ENCODE measurements at regions of chr17 and their contacts with region 1.

Region 1: GRCh38 chr17:8156246-8156992 is 4.2 kb upstream of the PER1 start:
- DNase-seq: peak; percentile 98
- ATAC-seq: peak; percentile 82
- H3K4me3 Mint-ChIP-seq: no peak overlapping the region
- H3K27ac Mint-ChIP-seq: no peak overlapping the region
- H3K4me1 Mint-ChIP-seq: peaks cover 48% of the 10 kb centered on the region
- H3K27me3 Mint-ChIP-seq: no peaks in the 10 kb centered on the region
- CTCF ChIP-seq: no peak

Region 2: DNA sequence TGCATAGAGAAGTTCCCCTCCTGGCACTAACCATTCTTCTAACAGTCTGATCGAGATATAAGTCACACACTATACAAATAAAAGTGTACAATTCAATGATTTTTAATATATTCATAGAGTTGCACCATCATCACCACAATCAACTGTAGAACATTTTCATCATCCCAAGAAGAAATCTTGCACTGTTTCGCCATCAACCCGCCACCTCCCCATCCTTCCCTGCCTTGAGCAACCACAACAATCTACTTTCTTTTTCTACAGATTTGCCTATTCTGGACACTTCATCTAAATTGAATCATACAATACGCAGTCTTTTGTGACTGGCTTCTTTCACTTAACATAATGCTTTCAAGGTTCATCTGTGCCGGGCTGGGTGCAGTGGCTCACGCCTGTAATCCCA is 187.0 kb before region 1 on chr17:
- CTCF ChIA-PET with region 1: no interaction called
- POLR2A ChIA-PET with region 1: no interaction called
- intact Hi-C with region 1: no loop called
- DNase-seq: no peak
- ATAC-seq: no peak
- H3K4me3 Mint-ChIP-seq: no peak overlapping the region
- H3K27ac Mint-ChIP-seq: no peak overlapping the region
- H3K4me1 Mint-ChIP-seq: no peaks in the 10 kb centered on the region
- H3K27me3 Mint-ChIP-seq: peaks cover 12% of the 10 kb centered on the region
- CTCF ChIP-seq: no peak

Region 3: DNA sequence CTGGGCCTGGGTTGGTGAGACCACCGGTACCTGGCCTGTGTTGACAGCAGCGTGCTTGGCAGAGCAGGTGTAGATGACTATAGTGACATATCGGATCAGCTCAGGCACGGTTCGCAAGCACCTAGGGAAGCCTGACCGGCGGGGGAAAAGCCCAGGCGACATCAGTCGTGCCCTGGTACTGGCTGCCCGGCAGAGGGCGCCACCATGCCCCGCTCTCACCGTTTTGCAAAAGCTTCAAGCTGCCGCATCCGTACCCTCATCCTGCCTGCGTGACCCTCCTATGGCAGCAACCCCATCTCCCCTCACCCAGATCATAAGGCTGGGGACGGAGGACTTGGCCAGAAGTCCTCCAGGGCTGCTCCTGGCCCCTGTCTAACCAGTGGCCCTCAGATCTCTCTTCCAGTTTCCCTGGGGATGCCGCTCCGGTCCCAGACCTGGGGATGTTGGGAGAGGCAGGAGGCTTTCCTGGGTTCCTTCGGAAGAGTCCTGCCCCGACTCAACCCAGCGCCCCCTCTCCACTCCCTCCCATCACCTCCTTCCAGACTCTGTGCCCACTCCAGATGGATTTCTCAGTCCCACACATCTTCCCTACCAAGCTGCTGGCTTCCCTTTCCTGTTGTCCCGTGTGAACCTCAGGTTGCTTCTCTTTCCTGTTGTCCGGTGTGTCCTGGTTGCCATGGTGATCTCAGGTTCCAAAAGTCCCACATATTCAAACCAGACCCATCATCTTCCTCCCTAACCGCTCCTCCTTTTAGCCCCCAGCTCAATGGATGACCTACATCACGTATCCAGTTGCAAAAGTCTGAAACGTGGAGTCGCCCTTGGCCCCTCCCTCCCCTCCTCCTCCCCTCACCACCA is 82.6 kb before region 1 on chr17:
- CTCF ChIA-PET with region 1: interaction called, 5 read pairs
- POLR2A ChIA-PET with region 1: interaction called, 5 read pairs
- intact Hi-C with region 1: loop called (anchors 1 kb)
- DNase-seq: peak; percentile 83
- ATAC-seq: peak; percentile 99
- H3K4me3 Mint-ChIP-seq: peak overlapping the region; percentile 78
- H3K27ac Mint-ChIP-seq: peak overlapping the region; percentile 78
- H3K4me1 Mint-ChIP-seq: peaks cover 31% of the 10 kb centered on the region
- H3K27me3 Mint-ChIP-seq: peaks cover 45% of the 10 kb centered on the region
- CTCF ChIP-seq: peak; percentile 56

Region 4: DNA sequence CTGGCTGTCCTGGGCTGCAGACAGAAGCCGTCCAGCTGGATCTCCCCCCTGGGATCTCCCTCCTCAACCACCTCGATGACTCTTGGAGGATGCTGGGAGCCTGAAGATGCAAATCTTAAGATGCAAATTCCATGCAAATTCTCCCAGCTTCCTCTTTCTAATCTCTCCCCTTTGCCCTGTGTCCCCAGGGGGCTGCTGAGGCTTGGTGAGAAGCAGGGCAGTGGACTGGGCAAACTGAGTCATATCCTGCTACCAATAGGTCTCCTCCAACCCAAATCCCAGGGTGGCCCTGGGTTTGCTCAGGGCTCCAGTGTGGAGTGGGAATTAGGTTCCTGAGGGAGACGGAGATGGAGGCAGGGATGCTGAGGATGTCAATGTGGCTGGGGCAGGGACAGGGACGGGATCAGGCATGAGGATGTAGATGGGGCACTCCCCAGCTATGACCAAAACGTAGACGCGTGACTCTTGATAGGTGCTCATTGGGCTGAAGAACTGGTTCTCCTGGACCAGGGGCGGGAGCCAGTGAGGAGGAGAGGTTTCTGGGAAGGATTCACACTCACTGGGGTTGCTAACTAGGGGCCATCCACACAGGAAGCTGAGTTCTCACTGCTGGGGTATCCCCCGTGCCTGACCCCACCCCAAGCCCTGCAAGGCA is 65.3 kb before region 1 on chr17:
- CTCF ChIA-PET with region 1: interaction called, 6 read pairs
- POLR2A ChIA-PET with region 1: interaction called, 24 read pairs
- intact Hi-C with region 1: no loop called
- DNase-seq: peak; percentile 71
- ATAC-seq: peak; percentile 90
- H3K4me3 Mint-ChIP-seq: peak overlapping the region; percentile 80
- H3K27ac Mint-ChIP-seq: peak overlapping the region; percentile 95
- H3K4me1 Mint-ChIP-seq: peaks cover 46% of the 10 kb centered on the region
- H3K27me3 Mint-ChIP-seq: peaks cover 7% of the 10 kb centered on the region
- CTCF ChIP-seq: no peak

Region 5: DNA sequence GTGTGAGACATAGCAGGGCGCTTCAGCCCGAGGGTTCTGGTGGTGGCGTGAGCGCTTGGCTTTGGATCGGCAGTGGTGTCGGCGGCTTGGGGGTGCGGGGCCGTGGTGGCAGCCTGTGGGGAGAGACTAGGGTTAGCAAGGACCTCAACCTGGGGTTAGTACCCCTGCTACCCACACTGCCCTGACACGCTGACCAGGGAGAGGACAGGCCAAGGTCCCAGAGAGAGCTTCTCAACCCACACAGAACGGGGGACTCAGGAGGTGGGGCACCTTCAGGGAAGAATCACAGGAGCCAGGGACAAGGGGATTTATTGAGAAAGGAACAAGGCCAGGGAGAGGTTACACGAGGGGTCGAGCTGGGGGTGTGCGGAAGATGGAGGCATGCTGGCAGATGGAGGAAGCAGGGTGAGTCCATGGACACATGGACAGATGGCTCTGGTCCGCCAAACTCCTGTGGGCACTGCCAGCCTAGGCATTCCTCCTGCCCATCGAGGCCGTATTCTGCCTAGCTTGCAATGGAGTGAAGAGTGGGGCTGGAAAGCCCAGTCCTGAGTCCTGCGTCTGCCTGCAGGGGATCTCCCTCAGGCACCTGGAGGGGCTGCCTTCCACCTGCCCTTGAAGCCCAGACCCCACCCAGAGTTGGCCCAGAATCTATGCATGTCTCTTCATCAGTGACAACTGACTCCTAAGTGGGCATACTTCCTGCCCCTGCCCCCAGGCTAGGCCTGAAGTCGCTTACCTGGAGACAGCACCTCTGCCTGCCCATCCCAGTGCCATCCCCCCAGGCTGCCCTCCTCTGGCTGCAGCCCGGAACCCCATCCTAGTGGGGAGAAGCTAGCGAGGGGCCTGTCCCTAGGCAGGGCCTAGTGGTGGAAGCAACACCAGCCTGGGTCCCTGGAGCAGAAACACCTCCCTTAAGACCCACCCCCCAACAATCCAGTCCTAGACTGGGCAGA is 12.4 kb before region 1 on chr17:
- CTCF ChIA-PET with region 1: interaction called, 9 read pairs
- POLR2A ChIA-PET with region 1: interaction called, 139 read pairs
- intact Hi-C with region 1: loop called (anchors 1 kb)
- DNase-seq: no peak
- ATAC-seq: no peak
- H3K4me3 Mint-ChIP-seq: no peak overlapping the region
- H3K27ac Mint-ChIP-seq: no peak overlapping the region
- H3K4me1 Mint-ChIP-seq: no peaks in the 10 kb centered on the region
- H3K27me3 Mint-ChIP-seq: no peaks in the 10 kb centered on the region
- CTCF ChIP-seq: no peak

Region 6: DNA sequence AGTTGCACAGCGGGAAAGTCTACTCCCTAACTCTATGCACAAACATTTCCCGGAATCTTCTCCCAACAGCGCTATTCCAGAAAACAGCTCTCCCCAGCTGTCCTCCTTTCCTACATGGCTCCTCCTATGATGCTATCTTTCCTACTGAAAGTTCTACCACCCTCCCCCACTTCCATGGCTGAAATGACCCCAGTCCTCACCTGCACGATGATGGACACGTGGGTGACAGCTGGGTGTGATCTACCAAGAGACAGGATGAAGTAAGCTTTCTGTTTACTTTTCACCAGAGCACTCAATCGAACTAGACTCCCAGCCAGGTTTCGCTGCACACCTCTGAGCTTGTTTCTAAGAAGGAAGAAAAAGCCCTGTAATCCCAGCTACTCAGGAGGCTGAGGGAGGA is 80.8 kb after region 1 on chr17:
- CTCF ChIA-PET with region 1: no interaction called
- POLR2A ChIA-PET with region 1: interaction called, 13 read pairs
- intact Hi-C with region 1: no loop called
- DNase-seq: no peak
- ATAC-seq: no peak
- H3K4me3 Mint-ChIP-seq: no peak overlapping the region
- H3K27ac Mint-ChIP-seq: no peak overlapping the region
- H3K4me1 Mint-ChIP-seq: peaks cover 2% of the 10 kb centered on the region
- H3K27me3 Mint-ChIP-seq: no peaks in the 10 kb centered on the region
- CTCF ChIP-seq: no peak